ENCODE measurements at regions of chr21 and their contacts with region 1.

Region 1: DNA sequence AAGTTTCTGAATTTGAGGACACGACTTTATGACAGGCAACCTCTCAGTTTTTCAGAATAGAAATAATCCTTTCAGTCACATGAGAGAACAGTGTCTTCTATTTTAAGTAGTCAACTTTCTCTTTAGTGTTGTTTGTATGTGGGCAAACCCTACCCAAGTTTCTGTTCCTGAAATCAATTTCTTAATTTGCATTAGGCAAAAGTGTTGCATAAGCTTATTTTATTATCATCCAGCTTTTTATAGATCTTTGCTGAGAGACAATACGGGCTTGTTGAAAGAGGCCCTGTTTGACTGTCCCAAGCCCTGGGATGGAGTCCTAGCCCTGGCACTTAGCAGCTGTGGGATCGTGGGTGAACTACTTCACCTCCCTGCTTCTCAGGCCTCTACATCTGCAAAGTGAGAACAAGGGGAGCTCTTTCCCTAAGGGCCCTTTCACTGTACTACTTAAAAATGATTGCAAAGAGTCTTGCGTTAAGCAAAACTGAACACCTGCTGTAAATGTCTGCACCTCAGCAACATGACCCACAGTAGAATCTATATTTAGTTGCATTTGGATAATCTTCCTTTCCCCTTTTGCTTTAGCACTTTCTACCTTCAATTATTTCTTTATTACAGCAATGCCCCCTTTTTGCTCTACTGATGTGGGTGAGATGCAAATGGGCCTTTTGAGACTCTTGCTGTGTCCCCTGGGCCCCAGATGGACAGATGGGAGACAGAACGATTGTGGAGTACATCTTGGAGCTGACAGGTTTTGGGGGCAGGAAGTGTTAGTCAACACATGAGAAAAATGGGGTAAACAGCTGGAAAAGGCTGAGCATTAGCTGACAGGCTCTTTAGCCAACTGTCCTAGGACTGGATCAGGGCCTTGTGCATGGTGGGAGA is 41.0 kb upstream of the SCAF4 start:
- DNase-seq: peak; percentile 90
- H3K4me3 ChIP-seq: peak overlapping the region; percentile 34
- H3K27ac ChIP-seq: peak overlapping the region; percentile 97
- H3K4me1 ChIP-seq: peaks cover 56% of the 10 kb centered on the region
- CTCF ChIP-seq: no peak

Region 2: DNA sequence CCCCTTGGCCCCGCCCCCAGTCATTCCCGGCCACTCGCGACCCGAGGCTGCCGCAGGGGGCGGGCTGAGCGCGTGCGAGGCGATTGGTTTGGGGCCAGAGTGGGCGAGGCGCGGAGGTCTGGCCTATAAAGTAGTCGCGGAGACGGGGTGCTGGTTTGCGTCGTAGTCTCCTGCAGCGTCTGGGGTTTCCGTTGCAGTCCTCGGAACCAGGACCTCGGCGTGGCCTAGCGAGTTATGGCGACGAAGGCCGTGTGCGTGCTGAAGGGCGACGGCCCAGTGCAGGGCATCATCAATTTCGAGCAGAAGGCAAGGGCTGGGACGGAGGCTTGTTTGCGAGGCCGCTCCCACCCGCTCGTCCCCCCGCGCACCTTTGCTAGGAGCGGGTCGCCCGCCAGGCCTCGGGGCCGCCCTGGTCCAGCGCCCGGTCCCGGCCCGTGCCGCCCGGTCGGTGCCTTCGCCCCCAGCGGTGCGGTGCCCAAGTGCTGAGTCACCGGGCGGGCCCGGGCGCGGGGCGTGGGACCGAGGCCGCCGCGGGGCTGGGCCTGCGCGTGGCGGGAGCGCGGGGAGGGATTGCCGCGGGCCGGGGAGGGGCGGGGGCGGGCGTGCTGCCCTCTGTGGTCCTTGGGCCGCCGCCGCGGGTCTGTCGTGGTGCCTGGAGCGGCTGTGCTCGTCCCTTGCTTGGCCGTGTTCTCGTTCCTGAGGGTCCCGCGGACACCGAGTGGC is 113.2 kb before region 1 on chr21 and contains the start of gene SOD1:
- CTCF ChIA-PET with region 1: no interaction called
- POLR2A ChIA-PET with region 1: no interaction called
- intact Hi-C with region 1: loop called (anchors 1 kb)
- DNase-seq: peak; percentile 96
- H3K4me3 ChIP-seq: peak within 1 kb of the TSS; percentile 89
- H3K27ac ChIP-seq: peak within 1 kb of the TSS; percentile 31
- H3K4me1 ChIP-seq: peaks cover 44% of the 10 kb centered on the region
- CTCF ChIP-seq: no peak
- total RNA-seq, gene SOD1: 229 and 316 TPM in 2 replicates

Region 3: DNA sequence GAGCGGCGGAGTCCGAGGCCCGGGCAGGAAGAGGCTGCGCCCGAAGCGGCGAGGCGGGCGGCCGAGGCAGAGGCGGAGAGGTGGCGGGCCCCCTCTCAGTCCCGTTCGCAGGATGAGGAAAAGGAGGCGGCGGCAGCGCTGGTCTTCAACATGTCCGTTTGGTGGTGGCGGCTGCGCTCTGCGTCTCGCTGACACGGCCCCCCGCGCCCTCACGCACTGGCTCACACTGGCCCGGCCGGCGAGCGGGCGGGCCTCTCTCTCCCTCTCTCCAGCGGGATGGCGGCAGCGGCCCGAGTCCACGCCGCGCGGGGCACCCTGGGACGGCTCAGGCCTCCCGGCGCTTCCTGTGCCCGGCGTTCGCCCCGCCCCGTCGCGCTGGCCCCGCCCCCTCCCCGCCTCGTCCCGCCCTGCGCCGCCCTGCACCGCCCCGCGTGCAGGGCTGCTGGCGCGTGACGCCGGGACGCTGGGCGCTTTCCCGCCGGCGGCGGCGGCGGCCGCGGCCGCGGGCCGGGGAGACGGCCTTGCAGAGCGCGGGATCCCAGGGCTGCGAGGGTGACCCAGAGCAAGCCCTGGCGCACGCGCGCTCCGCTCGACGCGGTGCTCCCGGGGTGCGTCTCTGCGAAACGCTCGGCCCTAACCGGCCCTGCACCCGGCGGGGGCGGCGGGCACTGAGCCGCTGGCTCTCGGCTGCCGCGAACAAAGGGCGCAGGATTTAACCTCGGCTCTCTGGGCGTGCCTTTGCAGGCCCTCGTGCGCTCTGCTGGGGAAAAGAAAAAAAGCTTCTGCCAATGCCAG is 40.9 kb before region 1 on chr21 and contains the start of gene SCAF4:
- CTCF ChIA-PET with region 1: interaction called, 4 read pairs
- POLR2A ChIA-PET with region 1: interaction called, 42 read pairs
- intact Hi-C with region 1: loop called (anchors 1 kb)
- DNase-seq: peak; percentile 91
- H3K4me3 ChIP-seq: peak within 1 kb of the TSS; percentile 85
- H3K27ac ChIP-seq: peak within 1 kb of the TSS; percentile 90
- H3K4me1 ChIP-seq: peaks cover 55% of the 10 kb centered on the region
- CTCF ChIP-seq: no peak
- total RNA-seq, gene SCAF4: 22.5 and 25.9 TPM in 2 replicates

Region 4: DNA sequence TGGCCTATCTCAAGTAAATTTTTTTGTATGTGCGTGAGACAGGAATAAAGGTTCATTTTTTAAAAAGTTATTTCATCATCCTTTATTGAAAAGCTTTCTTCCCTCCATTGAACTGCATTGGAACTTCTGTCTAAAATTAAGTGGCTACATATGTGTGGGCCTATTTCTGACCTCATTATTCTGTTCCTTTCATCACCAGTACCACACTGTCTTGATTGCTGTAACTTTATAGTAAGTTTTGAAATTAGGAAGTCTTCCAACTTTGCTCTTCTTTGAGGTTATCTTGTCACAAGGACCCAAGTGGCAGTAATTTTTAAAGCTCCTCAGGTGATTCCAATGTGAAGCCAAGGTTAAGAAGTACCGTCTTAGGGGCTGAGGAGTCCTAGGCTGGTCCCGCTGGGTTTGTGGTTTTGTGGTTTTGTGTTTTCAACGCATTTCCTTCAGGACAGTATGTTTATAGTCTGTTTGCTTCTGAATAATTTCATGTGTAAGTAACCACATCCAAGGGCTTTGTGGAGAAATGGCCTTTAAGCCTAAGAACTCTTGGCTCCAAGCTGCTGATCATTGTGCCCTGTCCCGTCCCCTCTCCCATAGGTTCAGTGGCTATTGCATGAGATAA is 28.6 kb before region 1 on chr21:
- CTCF ChIA-PET with region 1: no interaction called
- POLR2A ChIA-PET with region 1: interaction called, 20 read pairs
- intact Hi-C with region 1: no loop called
- DNase-seq: no peak
- H3K4me3 ChIP-seq: no peak overlapping the region
- H3K27ac ChIP-seq: no peak overlapping the region
- H3K4me1 ChIP-seq: peaks cover 10% of the 10 kb centered on the region
- CTCF ChIP-seq: no peak

Region 5: DNA sequence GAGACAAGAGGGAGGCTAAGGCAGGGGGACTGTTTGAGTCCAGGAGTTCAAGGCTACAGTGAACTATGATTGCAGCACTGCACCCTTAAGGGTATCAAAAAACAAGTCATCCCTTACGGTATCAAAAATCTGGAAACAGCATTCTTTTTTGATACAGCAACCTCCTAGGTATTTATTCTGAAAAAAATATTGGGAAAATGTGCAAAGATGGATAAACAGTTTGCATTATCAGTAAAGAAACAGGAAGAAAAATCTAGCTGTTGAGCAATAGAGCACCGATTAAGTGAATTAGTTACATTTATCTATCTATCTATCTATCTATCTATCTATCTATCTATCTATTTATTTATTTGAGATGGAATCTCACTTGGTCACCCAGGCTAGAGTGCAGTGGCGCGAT is 15.7 kb after region 1 on chr21:
- CTCF ChIA-PET with region 1: interaction called, 6 read pairs
- POLR2A ChIA-PET with region 1: interaction called, 19 read pairs
- intact Hi-C with region 1: no loop called
- DNase-seq: no peak
- H3K4me3 ChIP-seq: no peak overlapping the region
- H3K27ac ChIP-seq: no peak overlapping the region
- H3K4me1 ChIP-seq: peaks cover 22% of the 10 kb centered on the region
- CTCF ChIP-seq: no peak

Region 6: DNA sequence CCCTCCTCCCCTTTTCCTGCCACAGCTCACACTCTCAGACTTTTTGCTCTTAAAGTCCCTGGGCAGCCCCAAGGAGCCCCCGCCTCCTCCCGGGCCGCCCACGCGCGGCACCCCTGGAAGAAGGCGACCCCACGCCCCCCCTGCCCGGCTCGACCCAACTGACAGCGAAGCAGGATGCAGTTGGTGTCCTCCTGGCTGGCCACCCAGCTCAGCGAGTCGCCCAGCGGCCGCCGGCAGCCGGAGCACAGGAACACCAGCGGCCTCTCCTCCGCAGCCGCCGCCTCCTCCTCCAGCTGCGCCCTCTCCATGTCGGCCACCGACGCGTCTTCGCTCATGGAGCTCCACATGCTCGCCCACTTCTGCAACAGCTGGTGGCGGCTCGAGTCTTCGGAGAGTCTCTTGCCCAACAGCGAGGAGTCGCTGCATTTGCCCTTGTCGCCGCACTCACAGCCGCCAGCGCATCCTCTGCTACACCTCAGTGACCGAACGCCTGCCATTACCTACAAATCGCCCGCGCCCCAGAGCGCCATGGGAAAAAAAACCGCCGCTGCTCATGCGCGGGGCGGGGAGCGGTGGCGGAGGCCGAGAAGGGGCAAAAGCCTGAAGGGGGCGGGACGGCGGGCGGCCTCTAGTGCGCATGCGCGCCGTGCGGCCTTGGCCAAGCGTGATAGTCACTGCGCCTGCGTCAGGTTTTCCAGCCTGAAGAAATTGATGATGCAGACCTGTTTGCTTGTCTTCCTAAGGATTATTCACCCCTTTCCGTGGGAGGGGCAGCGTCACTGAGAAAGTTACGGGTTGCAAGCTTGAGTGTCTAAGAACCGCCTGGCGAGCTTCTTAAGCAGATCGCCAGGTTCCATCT is 505.8 kb after region 1 on chr21 and contains the start of gene MIS18A:
- CTCF ChIA-PET with region 1: no interaction called
- POLR2A ChIA-PET with region 1: interaction called, 3 read pairs
- intact Hi-C with region 1: loop called (anchors 5 kb)
- DNase-seq: peak; percentile 94
- H3K4me3 ChIP-seq: peak within 1 kb of the TSS; percentile 90
- H3K27ac ChIP-seq: peak within 1 kb of the TSS; percentile 80
- H3K4me1 ChIP-seq: peaks cover 23% of the 10 kb centered on the region
- CTCF ChIP-seq: 0 out of 2 replicates have a peak, but pooled peaks have one; percentile 17
- total RNA-seq, gene MIS18A: 25.2 and 31.7 TPM in 2 replicates